ENCODE measurements at regions of chr1 and their contacts with region 1.

Region 1: GRCh38 chr1:43414634-43415223 is 25.0 kb downstream of the SZT2 start:
- DNase-seq: no peak
- H3K4me3 ChIP-seq: no peak overlapping the region
- H3K27ac ChIP-seq: no peak overlapping the region
- H3K27me3 ChIP-seq: no peaks in the 10 kb centered on the region
- CTCF ChIP-seq: peak; percentile 68

Region 2: GRCh38 chr1:43220905-43221778 is 193.6 kb before region 1 on chr1:
- CTCF ChIA-PET with region 1: interaction called, 141 read pairs
- POLR2A ChIA-PET with region 1: no interaction called
- DNase-seq: no peak
- H3K4me3 ChIP-seq: no peak overlapping the region
- H3K27ac ChIP-seq: no peak overlapping the region
- H3K27me3 ChIP-seq: no peaks in the 10 kb centered on the region
- CTCF ChIP-seq: no peak

Region 3: GRCh38 chr1:43241413-43241836 is 173.3 kb before region 1 on chr1:
- CTCF ChIA-PET with region 1: interaction called, 16 read pairs
- POLR2A ChIA-PET with region 1: no interaction called
- DNase-seq: no peak
- H3K4me3 ChIP-seq: no peak overlapping the region
- H3K27ac ChIP-seq: no peak overlapping the region
- H3K27me3 ChIP-seq: no peaks in the 10 kb centered on the region
- CTCF ChIP-seq: no peak

Region 4: GRCh38 chr1:43427524-43427923 is 12.8 kb after region 1 on chr1:
- CTCF ChIA-PET with region 1: interaction called, 13 read pairs
- POLR2A ChIA-PET with region 1: no interaction called
- DNase-seq: no peak
- H3K4me3 ChIP-seq: no peak overlapping the region
- H3K27ac ChIP-seq: no peak overlapping the region
- H3K27me3 ChIP-seq: no peaks in the 10 kb centered on the region
- CTCF ChIP-seq: no peak

Measured in AG04450 (cell line).